Naive thymus-derived CD8-positive, alpha-beta T cell (primary cell): ENCODE measurements at regions of chr3 and their contacts with region 1.

Region 1: GRCh38 chr3:48918388-48919214 is at the start of gene ARIH2:
- DNase-seq: peak; percentile 82 to 93 (median 87)
- ATAC-seq: peak; percentile 81 to 83
- H3K4me3 Mint-ChIP-seq: peak within 1 kb of the TSS; percentile 93 to 99 (median 96)
- H3K27ac Mint-ChIP-seq: peak within 1 kb of the TSS; percentile 96 to 100 (median 99)
- H3K4me1 Mint-ChIP-seq: peaks cover 11 to 36% (median 26%) of the 10 kb centered on the region in 4 donors
- H3K27me3 Mint-ChIP-seq: no peaks in the 10 kb centered on the region
- polyA plus RNA-seq, gene ARIH2: 92.7 to 119 (median 101) TPM

Region 2: DNA sequence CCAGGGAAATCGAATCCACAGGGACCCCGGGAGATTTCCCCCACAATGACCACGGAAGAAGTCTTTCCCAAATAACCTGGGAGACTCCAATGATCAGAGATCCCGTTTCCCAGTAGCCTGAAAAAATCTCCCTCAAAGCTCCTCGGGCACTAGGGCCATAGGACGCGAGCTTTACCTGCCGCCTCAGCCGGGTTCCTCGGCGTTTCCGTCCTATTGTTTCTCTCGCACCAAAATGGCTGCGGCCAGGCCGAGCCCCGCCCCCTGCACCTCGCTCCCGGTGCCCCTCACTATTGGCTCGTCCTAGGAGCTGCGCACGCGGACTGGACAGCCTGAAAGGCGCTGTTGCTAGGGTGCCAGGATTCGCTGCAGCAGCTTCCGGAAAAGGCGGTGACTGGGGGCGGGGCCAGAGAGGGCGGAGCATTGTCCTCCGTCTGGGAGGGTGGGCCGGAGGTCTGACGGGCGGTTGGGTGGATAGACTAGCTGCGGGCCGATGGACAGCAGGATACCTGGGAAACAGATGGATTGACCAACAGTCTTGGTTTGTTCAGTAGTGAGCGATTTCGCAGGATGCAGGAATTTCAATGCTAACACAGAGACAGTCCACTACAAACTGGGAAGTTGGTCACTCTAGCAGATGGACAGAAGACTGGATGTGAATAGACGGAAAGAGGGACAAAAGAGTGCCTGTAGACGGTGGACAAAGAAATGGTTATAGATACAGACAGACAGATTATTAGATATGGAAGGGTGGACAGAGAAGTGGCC is 201.4 kb before region 1 on chr3 and contains the start of gene IP6K2:
- POLR2A ChIA-PET with region 1: interaction called, 10 read pairs
- DNase-seq: peak; percentile 94 to 99 (median 98)
- ATAC-seq: peak; percentile 99
- H3K4me3 Mint-ChIP-seq: peak within 1 kb of the TSS; percentile 88 to 99 (median 96)
- H3K27ac Mint-ChIP-seq: peak within 1 kb of the TSS; percentile 87 to 98 (median 97)
- H3K4me1 Mint-ChIP-seq: peaks cover 15 to 47% (median 43%) of the 10 kb centered on the region in 4 donors
- H3K27me3 Mint-ChIP-seq: peaks cover 0 to 2% (median 0%) of the 10 kb centered on the region in 5 donors
- polyA plus RNA-seq, gene IP6K2: 46.4 to 58.8 (median 51.4) TPM